H1 (cell line): ENCODE measurements at regions of chr20 and their contacts with region 1.

Region 1: GRCh38 chr20:53939572-53940359 is 130.6 kb downstream of the BCAS1 start:
- DNase-seq: peak; percentile 77 to 92
- H3K4me3 ChIP-seq: peak overlapping the region in 2 of 4 experiments; percentile 13 to 48; a peak in 2 of 8 replicates
- H3K27ac ChIP-seq: peak overlapping the region; percentile 35
- H3K4me1 ChIP-seq: peaks cover 6 to 25% (median 17%) of the 10 kb centered on the region in 4 experiments
- H3K27me3 ChIP-seq: no peaks in the 10 kb centered on the region
- CTCF ChIP-seq: peak; percentile 57 to 89 (median 82)
- EP300 ChIP-seq: no peak
- POLR2A ChIP-seq: no peak
- RAD21 ChIP-seq: peak; percentile 97 to 99

Region 2: GRCh38 chr20:53578492-53579222 is 361.1 kb before region 1 on chr20:
- CTCF ChIA-PET with region 1: interaction called, 30 read pairs
- POLR2A ChIA-PET with region 1: interaction called, 3 read pairs
- DNase-seq: no peak
- H3K4me3 ChIP-seq: no peak overlapping the region
- H3K27ac ChIP-seq: no peak overlapping the region
- H3K4me1 ChIP-seq: peaks cover 1 to 13% (median 9%) of the 10 kb centered on the region in 4 experiments; a peak in 4 of 7 replicates
- H3K27me3 ChIP-seq: no peaks in the 10 kb centered on the region
- CTCF ChIP-seq: peak in 2 of 3 experiments; percentile 74 to 98; a peak in 3 of 4 replicates
- EP300 ChIP-seq: no peak
- POLR2A ChIP-seq: no peak
- RAD21 ChIP-seq: peak; percentile 86 to 91

Region 3: DNA sequence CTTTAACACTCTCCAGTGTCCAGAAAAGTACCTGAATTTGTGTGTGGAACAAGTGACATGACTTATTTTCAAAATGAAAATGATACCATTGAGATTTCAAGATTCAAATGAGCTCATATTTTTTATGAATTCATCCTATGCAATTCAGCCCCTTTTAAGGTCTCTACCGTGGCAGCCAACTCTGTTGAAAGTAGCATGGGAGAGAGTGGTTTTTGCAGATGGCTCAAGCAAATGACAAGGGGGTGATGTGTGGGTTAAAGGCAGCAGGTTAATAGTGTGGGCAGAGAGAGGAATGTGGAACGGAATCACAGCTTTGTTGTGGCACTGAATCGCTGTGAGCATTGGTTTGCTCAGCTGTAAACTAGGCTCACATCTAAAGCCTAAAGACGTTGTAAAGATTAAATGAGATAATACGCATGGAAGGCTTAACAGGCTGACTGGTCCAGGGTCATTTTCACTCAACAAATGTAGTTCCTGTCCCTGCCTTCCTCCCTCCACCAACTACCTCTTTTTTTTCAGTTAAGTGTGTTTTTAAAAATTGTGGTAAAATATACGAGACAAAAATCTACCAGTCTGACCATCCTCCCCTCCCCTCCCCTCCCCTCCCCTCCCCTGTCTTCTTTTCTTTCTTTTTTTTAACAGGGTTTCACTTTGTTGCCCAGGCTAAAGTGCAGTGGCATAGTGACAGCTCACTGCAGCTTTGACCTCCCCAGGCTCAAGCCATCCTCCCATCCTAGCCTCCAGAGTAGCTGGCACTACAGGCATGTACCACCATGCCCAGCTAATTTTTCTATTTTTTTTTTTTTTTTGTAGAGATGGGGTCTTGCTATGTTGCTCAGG is 231.4 kb before region 1 on chr20:
- CTCF ChIA-PET with region 1: interaction called, 11 read pairs
- POLR2A ChIA-PET with region 1: interaction called, 3 read pairs
- DNase-seq: no peak
- H3K4me3 ChIP-seq: no peak overlapping the region
- H3K27ac ChIP-seq: no peak overlapping the region
- H3K4me1 ChIP-seq: peaks cover 6 to 21% (median 14%) of the 10 kb centered on the region in 4 experiments
- H3K27me3 ChIP-seq: no peaks in the 10 kb centered on the region; a peak in 1 of 7 replicates
- CTCF ChIP-seq: no peak
- EP300 ChIP-seq: no peak
- POLR2A ChIP-seq: no peak
- RAD21 ChIP-seq: no peak

Region 4: DNA sequence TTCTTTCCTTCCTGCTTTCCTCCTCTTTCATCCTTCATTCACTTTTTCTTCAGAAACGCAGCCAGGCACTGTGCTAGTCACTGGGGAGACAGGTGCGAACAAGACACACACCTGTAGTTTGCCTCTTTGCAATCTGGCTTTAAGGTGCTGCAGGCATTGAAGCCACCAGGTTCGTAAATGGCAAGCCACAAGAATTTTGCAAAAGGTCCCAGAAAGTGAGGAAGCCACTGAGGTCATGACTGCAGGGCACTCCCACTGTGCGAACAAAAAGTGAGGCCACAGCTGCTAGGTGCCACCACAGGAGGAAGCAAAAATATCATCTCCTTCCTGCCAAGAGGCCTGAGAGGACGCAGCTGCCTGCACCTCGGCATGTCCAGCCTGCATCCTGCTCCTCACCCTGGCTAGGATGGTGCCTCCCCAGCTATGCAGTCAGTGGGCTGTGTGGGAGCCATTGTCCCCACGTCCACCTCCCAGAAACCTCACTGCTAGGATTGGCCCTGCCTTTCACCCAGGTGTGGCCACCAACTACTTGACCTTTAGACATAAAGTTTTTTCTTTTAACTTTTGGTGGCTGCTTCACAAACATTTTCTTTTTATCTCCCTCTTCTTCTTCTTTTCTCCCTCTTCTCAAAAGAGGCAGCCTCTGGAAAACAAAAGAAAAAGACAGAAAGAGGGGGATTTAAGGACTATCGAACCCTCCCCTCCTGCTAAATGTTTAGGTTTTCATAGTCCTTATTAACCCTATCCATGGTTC is 100.2 kb before region 1 on chr20:
- CTCF ChIA-PET with region 1: no interaction called
- POLR2A ChIA-PET with region 1: no interaction called
- DNase-seq: no peak
- H3K4me3 ChIP-seq: no peak overlapping the region
- H3K27ac ChIP-seq: no peak overlapping the region
- H3K4me1 ChIP-seq: peaks cover 0 to 3% (median 1%) of the 10 kb centered on the region in 4 experiments; a peak in 1 of 7 replicates
- H3K27me3 ChIP-seq: no peaks in the 10 kb centered on the region
- CTCF ChIP-seq: no peak
- EP300 ChIP-seq: no peak
- POLR2A ChIP-seq: no peak
- RAD21 ChIP-seq: no peak